AG04450 (cell line): ENCODE measurements at regions of chr15 and their contacts with region 1.

Region 1: DNA sequence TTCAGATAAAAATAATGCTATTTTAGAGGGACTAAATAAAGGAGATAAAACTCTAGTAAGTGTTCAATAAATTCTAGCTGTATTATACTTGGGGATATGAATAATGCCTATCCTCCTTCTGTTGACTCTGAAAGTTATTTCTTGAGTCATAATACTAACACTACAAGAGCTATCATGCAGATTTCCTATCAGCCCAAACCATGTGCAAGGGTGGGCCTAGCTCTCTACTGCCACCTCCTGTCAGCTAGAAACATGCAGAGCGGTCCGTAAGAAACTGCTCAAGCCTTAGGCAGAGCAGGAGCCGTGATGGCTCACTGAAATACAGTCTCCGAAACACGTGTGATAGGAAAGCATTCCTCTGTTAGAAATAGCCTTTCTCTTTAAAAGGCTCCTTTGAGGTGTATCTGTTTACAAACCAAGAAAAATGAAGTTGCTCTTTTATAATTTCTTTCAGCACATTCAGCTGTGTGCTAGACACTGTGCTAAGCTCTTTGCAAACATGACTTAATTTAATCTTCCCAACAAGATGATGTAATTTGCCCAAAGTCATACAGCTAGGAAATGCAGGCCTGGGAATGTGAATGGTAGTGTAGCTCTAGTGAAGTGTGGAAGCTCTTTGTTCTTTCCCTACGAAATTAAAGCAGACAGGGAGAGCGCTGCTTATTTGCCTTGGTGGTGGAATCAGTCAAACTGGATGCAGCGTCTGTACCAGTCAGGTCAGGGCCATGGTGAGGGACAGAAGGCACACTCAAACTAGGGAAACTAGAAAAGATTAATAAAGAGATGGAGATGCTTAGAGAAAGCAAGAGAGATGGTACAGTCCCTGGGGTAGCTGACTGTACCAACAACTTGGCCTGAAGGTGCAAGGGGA is 43.1 kb downstream of the MTHFS start:
- DNase-seq: peak; percentile 81
- H3K4me3 ChIP-seq: no peak overlapping the region
- H3K27ac ChIP-seq: no peak overlapping the region
- H3K27me3 ChIP-seq: no peaks in the 10 kb centered on the region
- CTCF ChIP-seq: peak; percentile 99

Region 2: GRCh38 chr15:79394231-79394630 is 459.5 kb before region 1 on chr15:
- CTCF ChIA-PET with region 1: interaction called, 18 read pairs
- POLR2A ChIA-PET with region 1: no interaction called
- DNase-seq: peak; percentile 8
- H3K4me3 ChIP-seq: no peak overlapping the region
- H3K27ac ChIP-seq: no peak overlapping the region
- H3K27me3 ChIP-seq: no peaks in the 10 kb centered on the region
- CTCF ChIP-seq: no peak

Region 3: DNA sequence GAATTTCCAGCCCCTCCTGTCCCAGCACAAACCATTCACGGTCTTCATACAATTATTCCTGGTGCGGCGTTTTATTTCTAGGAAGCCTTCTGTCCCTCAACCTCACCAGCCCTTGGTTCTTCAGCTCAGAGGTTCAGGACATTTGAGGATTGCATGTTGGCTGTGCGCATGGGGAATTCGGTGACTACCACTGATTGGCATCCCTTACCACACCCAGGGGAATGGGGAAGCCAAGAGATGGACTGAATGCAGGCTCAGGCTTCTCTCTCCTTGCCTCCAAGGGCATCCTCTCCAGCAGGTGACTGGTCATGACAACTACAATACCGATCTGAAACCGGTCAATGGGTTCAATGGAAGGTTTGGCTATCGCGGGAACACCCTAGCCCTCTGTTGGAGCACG is 110.7 kb before region 1 on chr15:
- CTCF ChIA-PET with region 1: no interaction called
- POLR2A ChIA-PET with region 1: no interaction called
- DNase-seq: no peak
- H3K4me3 ChIP-seq: no peak overlapping the region
- H3K27ac ChIP-seq: no peak overlapping the region
- H3K27me3 ChIP-seq: no peaks in the 10 kb centered on the region
- CTCF ChIP-seq: no peak

Region 4: GRCh38 chr15:79837846-79838245 is 15.8 kb before region 1 on chr15:
- CTCF ChIA-PET with region 1: interaction called, 37 read pairs
- POLR2A ChIA-PET with region 1: no interaction called
- DNase-seq: no peak
- H3K4me3 ChIP-seq: no peak overlapping the region
- H3K27ac ChIP-seq: no peak overlapping the region
- H3K27me3 ChIP-seq: no peaks in the 10 kb centered on the region
- CTCF ChIP-seq: no peak

Region 5: DNA sequence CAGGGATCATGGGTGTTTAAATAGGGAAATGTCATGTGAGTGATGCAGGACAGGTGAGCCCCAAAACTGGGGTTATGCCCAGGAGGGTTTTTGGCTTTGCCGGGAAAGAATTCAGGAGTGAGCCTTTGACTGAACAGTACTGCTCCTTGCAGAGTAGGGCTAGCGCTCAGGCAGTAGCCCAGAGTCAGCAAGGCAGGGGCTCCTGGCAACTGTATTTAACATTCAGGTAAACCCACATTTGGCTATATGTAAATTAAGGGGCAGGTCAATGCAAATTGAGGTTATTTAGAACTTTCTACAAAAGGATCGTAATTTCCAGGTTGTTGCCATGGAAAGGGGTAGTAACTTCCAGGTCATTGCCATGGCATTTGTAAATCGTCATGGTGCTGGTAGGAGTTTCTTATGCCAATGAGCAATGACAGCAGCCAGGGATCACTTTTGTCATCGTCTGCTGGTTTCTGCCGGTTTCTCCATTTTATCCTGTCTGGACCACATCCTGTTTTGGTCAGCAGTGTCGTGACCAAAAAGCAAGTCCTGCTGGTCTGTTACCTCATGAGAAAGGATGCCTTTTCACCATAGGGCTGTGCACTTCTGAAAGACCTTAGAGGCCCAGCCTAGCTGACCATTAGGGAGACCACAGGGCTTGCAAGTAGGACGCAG is 18.8 kb after region 1 on chr15:
- CTCF ChIA-PET with region 1: interaction called, 50 read pairs
- POLR2A ChIA-PET with region 1: no interaction called
- DNase-seq: no peak
- H3K4me3 ChIP-seq: no peak overlapping the region
- H3K27ac ChIP-seq: no peak overlapping the region
- H3K27me3 ChIP-seq: no peaks in the 10 kb centered on the region
- CTCF ChIP-seq: no peak

Region 6: GRCh38 chr15:79923515-79924395 is 70.1 kb after region 1 on chr15:
- CTCF ChIA-PET with region 1: interaction called, 14 read pairs
- POLR2A ChIA-PET with region 1: no interaction called
- DNase-seq: peak; percentile 81
- H3K4me3 ChIP-seq: peak overlapping the region; percentile 88
- H3K27ac ChIP-seq: peak overlapping the region; percentile 90
- H3K27me3 ChIP-seq: no peaks in the 10 kb centered on the region
- CTCF ChIP-seq: no peak

Region 7: GRCh38 chr15:80219955-80220354 is 366.3 kb after region 1 on chr15:
- CTCF ChIA-PET with region 1: no interaction called
- POLR2A ChIA-PET with region 1: no interaction called
- DNase-seq: no peak
- H3K4me3 ChIP-seq: no peak overlapping the region
- H3K27ac ChIP-seq: no peak overlapping the region
- H3K27me3 ChIP-seq: peaks cover 2% of the 10 kb centered on the region
- CTCF ChIP-seq: no peak